Activated CD8-positive, alpha-beta T cell treated with anti-CD3 and anti-CD28 coated beads for 36 hours (primary cell): ENCODE measurements at regions of chr2 and their contacts with region 1.

Region 1: DNA sequence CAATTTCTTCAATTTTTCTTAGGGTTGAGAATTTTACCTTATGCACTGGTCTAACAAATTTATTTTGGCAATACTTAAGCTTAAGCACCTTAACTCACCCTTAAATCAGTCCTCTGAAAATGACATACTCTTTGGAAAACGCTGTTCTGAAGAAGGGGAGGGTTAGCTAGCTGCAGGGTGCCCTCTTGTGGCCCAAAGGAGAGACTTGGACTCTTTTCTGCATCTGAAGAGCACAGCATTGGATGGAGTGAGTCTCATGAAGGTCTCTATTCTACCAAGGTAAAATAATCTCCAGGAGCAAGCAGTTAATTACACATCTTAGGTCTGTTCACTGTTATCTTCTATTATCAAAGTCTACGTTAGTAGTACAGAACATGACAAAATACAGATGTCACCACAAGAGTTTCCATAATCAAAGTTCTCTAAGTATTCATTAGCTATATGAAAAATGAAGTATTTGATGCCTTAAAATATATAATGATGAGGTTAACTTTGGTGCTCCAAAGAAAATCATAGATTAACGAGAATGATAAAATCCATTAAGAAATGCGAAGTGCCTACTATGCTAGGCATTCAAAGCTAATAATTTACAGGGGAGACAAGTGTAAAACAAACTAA is 24.4 kb downstream of the PUM2 start:
- DNase-seq: peak; percentile 72
- ATAC-seq: peak; percentile 69
- H3K4me3 Mint-ChIP-seq: no peak overlapping the region
- H3K27ac Mint-ChIP-seq: peak overlapping the region; percentile 71
- H3K4me1 Mint-ChIP-seq: peaks cover 81% of the 10 kb centered on the region
- H3K27me3 Mint-ChIP-seq: no peaks in the 10 kb centered on the region
- CTCF ChIP-seq: peak; percentile 73

Region 2: GRCh38 chr2:19801367-19802080 is 524.7 kb before region 1 on chr2:
- CTCF ChIA-PET with region 1: no interaction called
- POLR2A ChIA-PET with region 1: no interaction called
- intact Hi-C with region 1: no loop called
- DNase-seq: no peak
- ATAC-seq: no peak
- H3K4me3 Mint-ChIP-seq: no peak overlapping the region
- H3K27ac Mint-ChIP-seq: no peak overlapping the region
- H3K4me1 Mint-ChIP-seq: no peaks in the 10 kb centered on the region
- H3K27me3 Mint-ChIP-seq: no peaks in the 10 kb centered on the region
- CTCF ChIP-seq: no peak

Region 3: DNA sequence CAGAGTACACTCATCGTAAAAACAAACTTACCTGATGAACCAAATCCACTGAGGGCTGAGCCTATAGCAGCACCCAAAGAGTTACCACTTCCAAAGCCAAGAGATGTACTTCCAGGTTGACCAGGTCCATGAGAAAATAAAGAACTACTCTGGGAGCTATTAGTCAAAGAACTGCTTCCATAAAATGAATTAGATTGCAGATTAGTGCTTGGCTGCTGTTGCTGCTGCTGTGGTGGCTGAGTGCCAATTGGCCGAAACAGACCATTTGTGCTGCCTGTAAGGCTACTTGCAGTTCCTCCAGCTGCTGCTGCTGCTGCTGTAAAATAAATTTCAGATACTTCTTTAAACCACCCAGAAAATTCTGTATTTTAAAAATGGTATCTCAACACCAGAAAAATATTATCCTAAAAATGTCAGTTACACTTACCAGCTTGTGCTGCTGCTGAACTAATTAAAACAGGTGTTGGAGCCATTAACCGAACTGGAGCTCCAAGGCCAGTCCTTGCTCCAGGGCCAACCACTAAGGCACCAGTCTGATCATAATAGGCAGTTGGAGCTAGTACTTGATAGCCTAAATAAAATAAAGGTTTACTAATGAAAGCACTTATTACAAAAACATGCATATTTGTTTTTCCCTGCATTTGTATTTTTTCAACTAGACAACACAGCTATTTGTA is 43.2 kb before region 1 on chr2:
- CTCF ChIA-PET with region 1: interaction called, 16 read pairs
- POLR2A ChIA-PET with region 1: no interaction called
- intact Hi-C with region 1: no loop called
- DNase-seq: no peak
- ATAC-seq: no peak
- H3K4me3 Mint-ChIP-seq: no peak overlapping the region
- H3K27ac Mint-ChIP-seq: no peak overlapping the region
- H3K4me1 Mint-ChIP-seq: peaks cover 6% of the 10 kb centered on the region
- H3K27me3 Mint-ChIP-seq: no peaks in the 10 kb centered on the region
- CTCF ChIP-seq: no peak

Region 4: DNA sequence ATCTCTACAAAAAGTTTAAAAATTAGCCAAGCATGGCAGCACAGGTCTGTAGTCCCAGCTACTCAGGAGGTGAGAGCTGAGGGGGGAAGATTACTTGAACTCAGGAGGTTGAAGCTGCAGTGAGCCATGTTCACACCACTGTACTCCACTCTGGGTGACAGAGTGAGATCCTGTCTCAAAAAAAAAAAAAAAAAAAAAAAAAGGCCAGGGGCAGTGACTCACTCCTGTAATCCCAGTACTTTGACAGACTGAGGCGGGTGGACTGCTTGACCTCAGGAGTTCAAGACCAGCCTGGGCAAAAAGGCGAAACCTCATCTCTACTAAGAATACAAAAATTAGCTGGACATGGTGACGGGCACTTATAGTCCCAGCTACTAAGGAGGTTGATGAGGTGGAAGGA is 12.6 kb before region 1 on chr2:
- CTCF ChIA-PET with region 1: interaction called, 23 read pairs
- POLR2A ChIA-PET with region 1: no interaction called
- intact Hi-C with region 1: no loop called
- DNase-seq: no peak
- ATAC-seq: peak; percentile 45
- H3K4me3 Mint-ChIP-seq: no peak overlapping the region
- H3K27ac Mint-ChIP-seq: no peak overlapping the region
- H3K4me1 Mint-ChIP-seq: peaks cover 32% of the 10 kb centered on the region
- H3K27me3 Mint-ChIP-seq: no peaks in the 10 kb centered on the region
- CTCF ChIP-seq: no peak

Region 5: GRCh38 chr2:20350753-20351554 is 24.7 kb after region 1 on chr2 and contains the start of gene PUM2:
- CTCF ChIA-PET with region 1: interaction called, 49 read pairs
- POLR2A ChIA-PET with region 1: interaction called, 6 read pairs
- intact Hi-C with region 1: no loop called
- DNase-seq: peak; percentile 93
- ATAC-seq: peak; percentile 85
- H3K4me3 Mint-ChIP-seq: no peak within 1 kb of the TSS
- H3K27ac Mint-ChIP-seq: peak within 1 kb of the TSS; percentile 92
- H3K4me1 Mint-ChIP-seq: peaks cover 26% of the 10 kb centered on the region
- H3K27me3 Mint-ChIP-seq: no peaks in the 10 kb centered on the region
- CTCF ChIP-seq: no peak
- total RNA-seq, gene PUM2: 104 TPM

Region 6: DNA sequence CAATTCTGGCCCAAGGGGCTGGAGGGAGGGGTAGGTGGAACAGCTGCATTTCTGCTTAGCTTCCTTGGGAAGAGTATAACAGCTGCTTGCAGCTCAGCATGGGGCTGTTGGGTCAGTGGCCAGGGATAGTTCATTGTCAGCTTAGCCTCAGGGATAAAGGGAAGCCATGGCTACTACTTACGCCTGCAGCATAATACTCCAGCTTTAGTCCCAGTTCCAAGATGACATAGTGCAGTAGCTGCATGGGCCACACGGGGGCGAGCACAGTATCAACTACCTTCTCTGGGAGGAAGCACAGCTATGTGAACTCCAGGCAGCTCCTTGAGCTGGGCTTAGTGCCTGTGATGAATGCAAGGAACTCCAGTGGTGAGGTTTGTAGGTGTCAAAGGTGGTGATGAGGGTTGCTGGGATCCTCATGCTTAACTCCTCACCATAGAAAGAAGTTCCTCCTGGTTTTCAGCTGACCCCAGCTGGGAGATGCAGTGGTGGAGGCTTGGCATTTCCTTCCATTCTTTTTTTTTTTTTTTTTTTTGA is 85.2 kb after region 1 on chr2:
- CTCF ChIA-PET with region 1: interaction called, 22 read pairs
- POLR2A ChIA-PET with region 1: interaction called, 3 read pairs
- intact Hi-C with region 1: no loop called
- DNase-seq: peak; percentile 89
- ATAC-seq: peak; percentile 100
- H3K4me3 Mint-ChIP-seq: no peak overlapping the region
- H3K27ac Mint-ChIP-seq: no peak overlapping the region
- H3K4me1 Mint-ChIP-seq: no peaks in the 10 kb centered on the region
- H3K27me3 Mint-ChIP-seq: peaks cover 9% of the 10 kb centered on the region
- CTCF ChIP-seq: peak; percentile 69

Region 7: GRCh38 chr2:20642055-20642971 is 316.0 kb after region 1 on chr2:
- CTCF ChIA-PET with region 1: interaction called, 11 read pairs
- POLR2A ChIA-PET with region 1: no interaction called
- intact Hi-C with region 1: no loop called
- DNase-seq: peak; percentile 80
- ATAC-seq: peak; percentile 99
- H3K4me3 Mint-ChIP-seq: no peak overlapping the region
- H3K27ac Mint-ChIP-seq: no peak overlapping the region
- H3K4me1 Mint-ChIP-seq: no peaks in the 10 kb centered on the region
- H3K27me3 Mint-ChIP-seq: no peaks in the 10 kb centered on the region
- CTCF ChIP-seq: peak; percentile 90

Region 8: GRCh38 chr2:20661067-20661980 is 335.1 kb after region 1 on chr2:
- CTCF ChIA-PET with region 1: no interaction called
- POLR2A ChIA-PET with region 1: no interaction called
- intact Hi-C with region 1: no loop called
- DNase-seq: peak; percentile 72
- ATAC-seq: peak; percentile 86
- H3K4me3 Mint-ChIP-seq: no peak overlapping the region
- H3K27ac Mint-ChIP-seq: no peak overlapping the region
- H3K4me1 Mint-ChIP-seq: peaks cover 9% of the 10 kb centered on the region
- H3K27me3 Mint-ChIP-seq: peaks cover 49% of the 10 kb centered on the region
- CTCF ChIP-seq: peak; percentile 93